Dorsolateral prefrontal cortex (tissue), 120 donors: ENCODE measurements at regions of chr18 and their contacts with region 1.

Region 1: GRCh38 chr18:78396077-78396476 is 583.5 kb upstream of the SALL3 start:
- DNase-seq: no peak
- H3K4me3 ChIP-seq: no peak overlapping the region
- H3K27ac ChIP-seq: no peak overlapping the region
- H3K27me3 ChIP-seq: peaks cover 0 to 29% (median 0%) of the 10 kb centered on the region in 45 donors
- CTCF ChIP-seq: no peak

Region 2: DNA sequence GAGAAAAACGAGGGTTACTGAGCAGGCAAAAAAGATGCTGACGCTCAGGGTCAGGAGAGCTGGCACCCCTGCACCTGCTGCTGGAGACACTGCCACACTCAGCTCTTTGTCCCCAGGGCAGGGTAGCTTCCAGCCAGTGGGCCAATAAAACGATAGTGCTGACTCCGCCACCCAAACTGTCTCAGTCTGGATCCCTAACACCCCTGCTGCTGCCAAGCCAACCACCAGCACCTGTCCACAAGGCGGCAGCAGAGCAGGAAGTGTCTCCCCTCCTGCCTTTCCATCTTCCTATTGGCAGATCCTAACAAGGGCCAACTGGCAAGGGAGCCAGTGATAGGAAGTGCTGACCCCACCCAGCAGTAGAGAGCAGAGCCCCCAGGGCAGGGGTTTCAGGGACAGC is 52.0 kb after region 1 on chr18:
- intact Hi-C with region 1: loop called in 1 of 2 experiments (anchors 5 kb)
- DNase-seq: no peak
- H3K4me3 ChIP-seq: no peak overlapping the region
- H3K27ac ChIP-seq: no peak overlapping the region
- H3K27me3 ChIP-seq: peaks cover 0 to 12% (median 0%) of the 10 kb centered on the region in 45 donors
- CTCF ChIP-seq: peak in 3 of 56 donors; percentile 11 to 19 (median 15)